Colonic mucosa (tissue), 4 donors: ENCODE measurements at regions of chr1 and their contacts with region 1.

Region 1: GRCh38 chr1:229479660-229480399 is 28.3 kb downstream of the NUP133 start:
- DNase-seq: no peak
- H3K4me3 ChIP-seq: no peak overlapping the region
- H3K27ac ChIP-seq: no peak overlapping the region
- H3K4me1 ChIP-seq: no peaks in the 10 kb centered on the region
- H3K27me3 ChIP-seq: no peaks in the 10 kb centered on the region
- CTCF ChIP-seq: no peak

Region 2: GRCh38 chr1:229258031-229258756 is 221.6 kb before region 1 on chr1:
- intact Hi-C with region 1: loop called (anchors 5 kb)
- DNase-seq: peak; percentile 78
- H3K4me3 ChIP-seq: no peak overlapping the region
- H3K27ac ChIP-seq: no peak overlapping the region
- H3K4me1 ChIP-seq: peaks cover under 1% of the 10 kb centered on the region
- H3K27me3 ChIP-seq: no peaks in the 10 kb centered on the region
- CTCF ChIP-seq: peak; percentile 74

Region 3: GRCh38 chr1:229388876-229389580 is 90.8 kb before region 1 on chr1:
- intact Hi-C with region 1: no loop called
- DNase-seq: no peak
- H3K4me3 ChIP-seq: no peak overlapping the region
- H3K27ac ChIP-seq: no peak overlapping the region
- H3K4me1 ChIP-seq: no peaks in the 10 kb centered on the region
- H3K27me3 ChIP-seq: no peaks in the 10 kb centered on the region
- CTCF ChIP-seq: no peak

Region 4: GRCh38 chr1:229699613-229700267 is 219.9 kb after region 1 on chr1:
- intact Hi-C with region 1: no loop called
- DNase-seq: no peak
- H3K4me3 ChIP-seq: no peak overlapping the region
- H3K27ac ChIP-seq: no peak overlapping the region
- H3K4me1 ChIP-seq: no peaks in the 10 kb centered on the region
- H3K27me3 ChIP-seq: no peaks in the 10 kb centered on the region
- CTCF ChIP-seq: no peak